ENCODE measurements at regions of chr16 and their contacts with region 1.

Region 1: DNA sequence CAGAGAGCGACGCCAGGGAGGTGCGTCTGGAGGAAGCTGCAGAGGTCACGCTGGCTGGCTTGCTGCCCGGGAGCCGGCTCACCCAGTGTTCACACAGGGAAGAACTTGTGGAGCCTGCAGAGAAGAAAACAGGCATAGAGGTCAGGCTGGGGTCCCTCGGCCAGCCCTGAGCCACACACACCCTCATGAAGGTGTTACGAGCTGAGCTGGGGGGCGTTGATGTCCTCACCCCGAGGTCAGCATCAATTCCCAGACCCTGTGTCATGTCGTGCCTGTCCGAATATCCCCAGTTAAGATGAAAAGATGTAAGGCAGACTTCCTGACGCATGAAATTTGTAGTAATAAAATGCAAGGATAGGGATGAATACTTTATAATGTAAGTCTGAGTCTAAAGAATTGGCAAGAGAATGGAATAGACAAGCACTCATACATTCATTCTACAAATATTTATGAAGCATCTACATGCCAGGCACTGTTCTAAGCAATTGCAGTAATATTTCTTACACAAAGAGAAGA is 77.1 kb downstream of the USP31 start:
- DNase-seq: peak; percentile 92
- ATAC-seq: peak; percentile 79

Region 2: GRCh38 chr16:22955461-22956070 is 116.6 kb before region 1 on chr16:
- intact Hi-C with region 1: no loop called
- DNase-seq: no peak
- ATAC-seq: no peak

Region 3: DNA sequence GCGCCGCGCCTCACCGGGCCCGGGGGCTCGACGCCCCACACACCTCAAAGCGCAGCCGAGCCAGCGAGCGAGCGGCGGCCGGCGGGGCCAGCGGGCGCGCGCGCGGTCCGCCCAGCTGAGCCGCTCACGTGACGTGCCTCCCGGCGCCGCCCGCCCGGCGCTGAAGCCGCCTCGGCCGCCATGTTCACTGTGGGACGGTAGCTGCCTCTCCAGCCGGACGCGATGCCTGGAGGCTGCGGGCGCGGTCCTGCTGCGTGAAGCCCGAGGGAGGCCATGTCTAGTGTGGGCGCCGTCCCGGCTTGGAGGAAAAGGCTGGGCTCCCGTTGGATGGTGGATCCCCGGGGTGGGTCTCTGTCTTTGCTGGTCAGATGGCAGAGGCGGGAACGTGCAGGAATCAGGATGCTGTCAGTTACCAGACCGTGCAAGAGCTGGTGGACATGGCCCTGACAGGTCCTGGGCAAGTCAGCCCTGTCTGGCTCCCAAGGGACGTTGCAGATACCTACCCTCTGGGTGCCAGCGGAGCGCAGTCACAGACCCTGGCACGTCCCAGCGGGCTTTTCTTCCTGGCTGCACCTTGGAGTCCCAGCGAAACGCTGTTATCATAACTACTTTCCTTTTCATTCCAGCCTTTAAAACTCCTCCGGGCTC is 77.3 kb after region 1 on chr16 and contains the start of gene USP31:
- intact Hi-C with region 1: loop called (anchors 2 kb)
- DNase-seq: peak; percentile 98
- ATAC-seq: peak; percentile 98
- total RNA-seq, gene USP31: 26.8 TPM

Region 4: DNA sequence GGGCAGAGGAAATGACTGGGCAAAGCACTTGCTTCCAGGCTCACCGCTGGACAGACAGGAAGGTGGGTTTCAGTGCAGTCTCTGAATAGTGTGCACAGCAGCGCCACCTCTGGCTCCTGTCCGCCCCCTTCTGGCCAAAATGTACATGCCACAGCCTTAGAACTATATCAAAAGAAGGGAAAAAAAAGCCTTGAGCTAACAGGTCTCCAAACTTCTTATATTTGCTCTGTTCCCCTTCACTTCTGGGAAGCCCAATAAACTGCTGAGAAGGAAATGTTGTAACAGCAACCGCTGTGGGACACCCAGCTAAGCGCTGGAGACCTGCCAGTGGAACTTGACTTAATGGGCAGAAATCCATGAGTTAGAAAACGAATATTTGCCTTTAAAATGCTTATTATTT is 363.4 kb after region 1 on chr16:
- intact Hi-C with region 1: loop called (anchors 10 kb)
- DNase-seq: no peak
- ATAC-seq: peak; percentile 66

Measured in Right ventricle myocardium inferior (tissue), 1 donor.